HCT116 (cell line): ENCODE measurements at regions of chr6 and their contacts with region 1.

Region 1: GRCh38 chr6:113909234-113909856 is 52.2 kb downstream of the MARCKS start:
- DNase-seq: peak; percentile 36
- ATAC-seq: peak; percentile 65
- H3K4me3 ChIP-seq: no peak overlapping the region
- H3K27ac ChIP-seq: no peak overlapping the region
- H3K4me1 ChIP-seq: no peaks in the 10 kb centered on the region
- H3K27me3 ChIP-seq: no peaks in the 10 kb centered on the region
- CTCF ChIP-seq: peak; percentile 26 to 75 (median 54); a peak in 4 of 6 replicates
- POLR2A ChIP-seq: no peak
- RAD21 ChIP-seq: peak; percentile 81

Region 2: GRCh38 chr6:112337209-112337638 is 1572.1 kb before region 1 on chr6:
- CTCF ChIA-PET with region 1: no interaction called
- POLR2A ChIA-PET with region 1: no interaction called
- RAD21 ChIA-PET with region 1: no interaction called
- intact Hi-C with region 1: loop called (anchors 10 kb)
- DNase-seq: peak; percentile 43
- ATAC-seq: peak; percentile 99
- H3K4me3 ChIP-seq: no peak overlapping the region
- H3K27ac ChIP-seq: no peak overlapping the region
- H3K4me1 ChIP-seq: no peaks in the 10 kb centered on the region
- H3K27me3 ChIP-seq: no peaks in the 10 kb centered on the region
- CTCF ChIP-seq: peak; percentile 54 to 76 (median 75); a peak in 5 of 6 replicates
- POLR2A ChIP-seq: no peak
- RAD21 ChIP-seq: peak; percentile 80

Region 3: DNA sequence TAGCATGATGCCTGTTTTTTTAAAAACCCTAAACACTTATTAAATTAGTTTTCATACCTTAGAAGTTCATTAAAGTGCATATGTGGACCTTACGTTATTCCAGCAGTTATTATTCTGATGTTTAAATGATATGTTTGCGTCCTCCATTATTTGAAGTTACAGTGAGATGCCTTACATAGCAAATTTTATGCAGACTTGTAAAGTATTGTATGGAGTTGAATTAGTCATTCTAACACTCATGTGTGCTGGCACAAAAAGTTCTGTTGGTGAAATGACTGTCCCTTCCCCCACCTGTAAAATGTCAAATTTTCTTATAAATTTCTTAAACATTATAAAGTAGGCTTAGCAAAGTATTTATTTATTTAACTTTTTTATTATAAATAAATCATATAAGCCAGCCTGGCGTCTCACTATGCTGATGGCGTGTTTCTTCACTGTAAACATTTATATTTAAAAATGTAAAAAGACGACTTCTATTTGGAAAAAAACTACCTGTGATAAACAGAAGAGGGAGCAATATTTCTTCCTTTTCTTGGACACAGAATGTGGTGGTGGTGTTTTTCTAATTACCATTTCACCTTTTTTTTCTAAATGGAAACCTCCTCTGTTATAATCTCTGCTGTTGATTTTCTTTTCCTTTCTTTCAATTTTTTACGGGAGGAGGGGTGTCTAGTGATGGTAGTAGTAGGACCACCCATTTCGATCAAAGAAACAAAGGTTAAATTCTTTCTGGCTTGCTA is 1406.8 kb before region 1 on chr6:
- CTCF ChIA-PET with region 1: no interaction called
- POLR2A ChIA-PET with region 1: no interaction called
- RAD21 ChIA-PET with region 1: interaction called in 1 of 2 experiments, 3 read pairs
- intact Hi-C with region 1: loop called (anchors 2 kb)
- DNase-seq: no peak
- ATAC-seq: peak; percentile 49
- H3K4me3 ChIP-seq: no peak overlapping the region
- H3K27ac ChIP-seq: no peak overlapping the region
- H3K4me1 ChIP-seq: no peaks in the 10 kb centered on the region
- H3K27me3 ChIP-seq: no peaks in the 10 kb centered on the region
- CTCF ChIP-seq: peak; percentile 31 to 49 (median 33); a peak in 4 of 6 replicates
- POLR2A ChIP-seq: no peak
- RAD21 ChIP-seq: peak; percentile 52

Region 4: GRCh38 chr6:114342826-114343780 is 433.8 kb after region 1 on chr6 and contains the start of gene HS3ST5:
- CTCF ChIA-PET with region 1: no interaction called
- POLR2A ChIA-PET with region 1: no interaction called
- RAD21 ChIA-PET with region 1: no interaction called
- intact Hi-C with region 1: no loop called
- DNase-seq: peak; percentile 6
- ATAC-seq: peak; percentile 96
- H3K4me3 ChIP-seq: no peak within 1 kb of the TSS
- H3K27ac ChIP-seq: no peak within 1 kb of the TSS
- H3K4me1 ChIP-seq: no peaks in the 10 kb centered on the region
- H3K27me3 ChIP-seq: peaks cover 13% of the 10 kb centered on the region; the same call in 1 of the 2 replicates
- CTCF ChIP-seq: peak in 2 of 3 experiments; percentile 32 to 35; a peak in 2 of 6 replicates
- POLR2A ChIP-seq: no peak
- RAD21 ChIP-seq: peak; percentile 41; the same call in 1 of the 2 replicates
- total RNA-seq, gene HS3ST5: not detected